ENCODE measurements at regions of chr2 and their contacts with region 1.

Region 1: GRCh38 chr2:38115216-38116032 is 39.5 kb upstream of the CYP1B1 start:
- DNase-seq: peak; percentile 69 to 86
- H3K4me3 ChIP-seq: no peak overlapping the region
- H3K27ac ChIP-seq: peak overlapping the region; percentile 42
- H3K4me1 ChIP-seq: peaks cover 44% of the 10 kb centered on the region
- H3K27me3 ChIP-seq: no peaks in the 10 kb centered on the region
- CTCF ChIP-seq: peak; percentile 100

Region 2: DNA sequence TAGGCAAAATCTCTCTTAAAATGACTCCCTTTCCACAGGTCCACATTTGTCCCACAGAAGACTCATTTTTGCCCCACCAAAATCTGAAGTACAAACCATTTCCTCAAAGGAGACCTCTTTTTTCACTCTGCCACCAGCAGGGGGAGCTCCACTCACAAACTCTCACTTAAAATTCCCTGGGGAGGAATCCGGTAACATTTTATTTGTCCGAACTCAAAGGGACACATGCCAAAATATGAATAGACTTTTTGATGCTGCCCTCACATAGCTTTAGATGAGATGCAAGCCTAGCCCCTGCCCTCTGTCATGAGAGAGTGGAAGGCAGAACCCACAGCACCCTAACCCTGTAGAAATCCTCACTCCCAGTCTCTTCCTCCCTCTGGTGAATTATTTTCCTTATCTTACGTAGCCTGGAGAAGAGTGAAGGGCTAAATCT is 133.3 kb before region 1 on chr2:
- CTCF ChIA-PET with region 1: no interaction called
- POLR2A ChIA-PET with region 1: no interaction called
- intact Hi-C with region 1: loop called (anchors 1 kb)
- DNase-seq: peak; percentile 48 to 61
- H3K4me3 ChIP-seq: no peak overlapping the region
- H3K27ac ChIP-seq: no peak overlapping the region
- H3K4me1 ChIP-seq: peaks cover 12% of the 10 kb centered on the region
- H3K27me3 ChIP-seq: no peaks in the 10 kb centered on the region
- CTCF ChIP-seq: peak; percentile 96

Region 3: GRCh38 chr2:37997629-37998028 is 117.8 kb before region 1 on chr2:
- CTCF ChIA-PET with region 1: no interaction called
- POLR2A ChIA-PET with region 1: no interaction called
- intact Hi-C with region 1: no loop called
- DNase-seq: no peak
- H3K4me3 ChIP-seq: no peak overlapping the region
- H3K27ac ChIP-seq: no peak overlapping the region
- H3K4me1 ChIP-seq: no peaks in the 10 kb centered on the region
- H3K27me3 ChIP-seq: no peaks in the 10 kb centered on the region
- CTCF ChIP-seq: no peak

Region 4: GRCh38 chr2:38095996-38096861 is 19.2 kb before region 1 on chr2:
- CTCF ChIA-PET with region 1: interaction called, 3 read pairs
- POLR2A ChIA-PET with region 1: no interaction called
- intact Hi-C with region 1: loop called (anchors 1 kb)
- DNase-seq: peak; percentile 77 to 100
- H3K4me3 ChIP-seq: peak overlapping the region; percentile 24; the same call in 1 of the 2 replicates
- H3K27ac ChIP-seq: peak overlapping the region; percentile 97
- H3K4me1 ChIP-seq: peaks cover 88% of the 10 kb centered on the region
- H3K27me3 ChIP-seq: no peaks in the 10 kb centered on the region
- CTCF ChIP-seq: no peak; the same call in 1 of the 2 replicates

Region 5: GRCh38 chr2:38178547-38179419 is 63.4 kb after region 1 on chr2:
- CTCF ChIA-PET with region 1: no interaction called
- POLR2A ChIA-PET with region 1: no interaction called
- intact Hi-C with region 1: loop called (anchors 5 kb)
- DNase-seq: peak; percentile 48 to 73
- H3K4me3 ChIP-seq: no peak overlapping the region
- H3K27ac ChIP-seq: peak overlapping the region; percentile 25
- H3K4me1 ChIP-seq: peaks cover 41% of the 10 kb centered on the region
- H3K27me3 ChIP-seq: no peaks in the 10 kb centered on the region
- CTCF ChIP-seq: no peak

Measured in PC-9 (cell line).